ENCODE measurements at regions of chr3 and their contacts with region 1.

Region 1: GRCh38 chr3:65334045-65334665 is 646.4 kb upstream of the ADAMTS9 start:
- DNase-seq: peak in 1 of 2 experiments; percentile 63
- H3K4me3 ChIP-seq: no peak overlapping the region
- H3K27ac ChIP-seq: no peak overlapping the region
- H3K4me1 ChIP-seq: peaks cover 0 to 5% (median 0%) of the 10 kb centered on the region in 4 experiments; a peak in 1 of 7 replicates
- H3K27me3 ChIP-seq: no peaks in the 10 kb centered on the region
- CTCF ChIP-seq: peak; percentile 47 to 64 (median 59)
- EP300 ChIP-seq: no peak
- POLR2A ChIP-seq: no peak
- RAD21 ChIP-seq: peak; percentile 83 to 89

Region 2: DNA sequence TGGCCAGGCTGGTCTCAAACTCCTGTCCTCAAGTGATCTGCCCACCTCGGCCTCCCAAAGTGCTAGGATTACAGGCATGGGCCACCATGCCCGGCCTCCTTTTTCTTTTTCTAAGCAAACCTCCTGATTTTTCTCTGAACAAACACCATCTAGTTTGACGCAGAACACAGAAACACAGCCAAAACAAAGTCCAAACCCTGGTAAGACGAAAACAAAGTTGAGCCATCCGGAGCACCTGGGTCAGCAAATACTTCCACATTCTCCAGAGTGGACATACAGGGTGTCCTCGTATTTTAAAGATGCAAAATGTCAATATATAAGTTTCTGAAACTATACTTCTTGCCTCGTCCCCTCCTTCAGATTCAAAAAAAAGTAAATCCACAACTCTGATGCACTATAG is 11.2 kb before region 1 on chr3:
- CTCF ChIA-PET with region 1: interaction called, 11 read pairs
- POLR2A ChIA-PET with region 1: no interaction called
- DNase-seq: no peak
- H3K4me3 ChIP-seq: no peak overlapping the region
- H3K27ac ChIP-seq: no peak overlapping the region
- H3K4me1 ChIP-seq: no peaks in the 10 kb centered on the region
- H3K27me3 ChIP-seq: no peaks in the 10 kb centered on the region
- CTCF ChIP-seq: no peak
- EP300 ChIP-seq: no peak
- POLR2A ChIP-seq: no peak
- RAD21 ChIP-seq: no peak

Region 3: GRCh38 chr3:65348398-65348995 is 14.3 kb after region 1 on chr3:
- CTCF ChIA-PET with region 1: interaction called, 17 read pairs
- POLR2A ChIA-PET with region 1: interaction called, 3 read pairs
- DNase-seq: no peak
- H3K4me3 ChIP-seq: no peak overlapping the region
- H3K27ac ChIP-seq: no peak overlapping the region
- H3K4me1 ChIP-seq: peaks cover 4 to 15% (median 7%) of the 10 kb centered on the region in 4 experiments; a peak in 6 of 7 replicates
- H3K27me3 ChIP-seq: no peaks in the 10 kb centered on the region
- CTCF ChIP-seq: no peak
- EP300 ChIP-seq: no peak
- POLR2A ChIP-seq: no peak
- RAD21 ChIP-seq: no peak

Region 4: GRCh38 chr3:65412588-65412987 is 78.4 kb after region 1 on chr3:
- CTCF ChIA-PET with region 1: interaction called, 16 read pairs
- POLR2A ChIA-PET with region 1: no interaction called
- DNase-seq: no peak
- H3K4me3 ChIP-seq: no peak overlapping the region
- H3K27ac ChIP-seq: no peak overlapping the region
- H3K4me1 ChIP-seq: peaks cover 0 to 5% (median 3%) of the 10 kb centered on the region in 4 experiments; a peak in 2 of 7 replicates
- H3K27me3 ChIP-seq: no peaks in the 10 kb centered on the region
- CTCF ChIP-seq: peak; percentile 42 to 51 (median 44)
- EP300 ChIP-seq: no peak
- POLR2A ChIP-seq: no peak
- RAD21 ChIP-seq: peak; percentile 64 to 74

Region 5: GRCh38 chr3:65433480-65433879 is 99.3 kb after region 1 on chr3:
- CTCF ChIA-PET with region 1: interaction called, 17 read pairs
- POLR2A ChIA-PET with region 1: interaction called, 4 read pairs
- DNase-seq: no peak
- H3K4me3 ChIP-seq: no peak overlapping the region
- H3K27ac ChIP-seq: no peak overlapping the region
- H3K4me1 ChIP-seq: no peaks in the 10 kb centered on the region
- H3K27me3 ChIP-seq: no peaks in the 10 kb centered on the region
- CTCF ChIP-seq: no peak
- EP300 ChIP-seq: no peak
- POLR2A ChIP-seq: no peak
- RAD21 ChIP-seq: no peak

Measured in H1 (cell line).